Activated CD4-positive, alpha-beta memory T cell treated with anti-CD3 and anti-CD28 coated beads for 36 hours (primary cell): ENCODE measurements at regions of chr18 and their contacts with region 1.

Region 1: GRCh38 chr18:11518788-11519685 is 90.4 kb upstream of the SLC35G4 start:
- DNase-seq: peak; percentile 55
- H3K4me3 Mint-ChIP-seq: no peak overlapping the region
- H3K27ac Mint-ChIP-seq: no peak overlapping the region
- H3K4me1 Mint-ChIP-seq: no peaks in the 10 kb centered on the region
- H3K27me3 Mint-ChIP-seq: no peaks in the 10 kb centered on the region

Region 2: GRCh38 chr18:11310476-11311086 is 208.5 kb before region 1 on chr18:
- CTCF ChIA-PET with region 1: interaction called, 5 read pairs
- POLR2A ChIA-PET with region 1: no interaction called
- intact Hi-C with region 1: loop called (anchors 10 kb)
- DNase-seq: peak; percentile 43
- H3K4me3 Mint-ChIP-seq: no peak overlapping the region
- H3K27ac Mint-ChIP-seq: no peak overlapping the region
- H3K4me1 Mint-ChIP-seq: no peaks in the 10 kb centered on the region
- H3K27me3 Mint-ChIP-seq: peaks cover 2% of the 10 kb centered on the region

Region 3: GRCh38 chr18:11980555-11981382 is 461.7 kb after region 1 on chr18:
- CTCF ChIA-PET with region 1: no interaction called
- POLR2A ChIA-PET with region 1: no interaction called
- intact Hi-C with region 1: no loop called
- DNase-seq: peak; percentile 99
- H3K4me3 Mint-ChIP-seq: peak overlapping the region; percentile 76
- H3K27ac Mint-ChIP-seq: peak overlapping the region; percentile 62
- H3K4me1 Mint-ChIP-seq: peaks cover 16% of the 10 kb centered on the region
- H3K27me3 Mint-ChIP-seq: peaks cover 7% of the 10 kb centered on the region